IMR-90 (cell line): ENCODE measurements at regions of chr12 and their contacts with region 1.

Region 1: GRCh38 chr12:66717036-66717673 is 38.3 kb upstream of the GRIP1 start:
- DNase-seq: no peak
- ATAC-seq: no peak
- H3K4me3 ChIP-seq: no peak overlapping the region
- H3K27ac ChIP-seq: no peak overlapping the region
- H3K4me1 ChIP-seq: no peaks in the 10 kb centered on the region
- H3K27me3 ChIP-seq: no peaks in the 10 kb centered on the region
- CTCF ChIP-seq: no peak
- POLR2A ChIP-seq: no peak
- RAD21 ChIP-seq: no peak

Region 2: GRCh38 chr12:66269757-66270383 is 447.3 kb before region 1 on chr12:
- CTCF ChIA-PET with region 1: no interaction called
- POLR2A ChIA-PET with region 1: no interaction called
- dilution Hi-C with region 1: no loop called
- in situ Hi-C with region 1: loop called (anchors 10 kb)
- intact Hi-C with region 1: no loop called
- DNase-seq: peak; percentile 62
- ATAC-seq: peak; percentile 92
- H3K4me3 ChIP-seq: no peak overlapping the region
- H3K27ac ChIP-seq: no peak overlapping the region
- H3K4me1 ChIP-seq: no peaks in the 10 kb centered on the region
- H3K27me3 ChIP-seq: peaks cover 15% of the 10 kb centered on the region
- CTCF ChIP-seq: peak; percentile 75
- POLR2A ChIP-seq: no peak
- RAD21 ChIP-seq: peak; percentile 61

Region 3: DNA sequence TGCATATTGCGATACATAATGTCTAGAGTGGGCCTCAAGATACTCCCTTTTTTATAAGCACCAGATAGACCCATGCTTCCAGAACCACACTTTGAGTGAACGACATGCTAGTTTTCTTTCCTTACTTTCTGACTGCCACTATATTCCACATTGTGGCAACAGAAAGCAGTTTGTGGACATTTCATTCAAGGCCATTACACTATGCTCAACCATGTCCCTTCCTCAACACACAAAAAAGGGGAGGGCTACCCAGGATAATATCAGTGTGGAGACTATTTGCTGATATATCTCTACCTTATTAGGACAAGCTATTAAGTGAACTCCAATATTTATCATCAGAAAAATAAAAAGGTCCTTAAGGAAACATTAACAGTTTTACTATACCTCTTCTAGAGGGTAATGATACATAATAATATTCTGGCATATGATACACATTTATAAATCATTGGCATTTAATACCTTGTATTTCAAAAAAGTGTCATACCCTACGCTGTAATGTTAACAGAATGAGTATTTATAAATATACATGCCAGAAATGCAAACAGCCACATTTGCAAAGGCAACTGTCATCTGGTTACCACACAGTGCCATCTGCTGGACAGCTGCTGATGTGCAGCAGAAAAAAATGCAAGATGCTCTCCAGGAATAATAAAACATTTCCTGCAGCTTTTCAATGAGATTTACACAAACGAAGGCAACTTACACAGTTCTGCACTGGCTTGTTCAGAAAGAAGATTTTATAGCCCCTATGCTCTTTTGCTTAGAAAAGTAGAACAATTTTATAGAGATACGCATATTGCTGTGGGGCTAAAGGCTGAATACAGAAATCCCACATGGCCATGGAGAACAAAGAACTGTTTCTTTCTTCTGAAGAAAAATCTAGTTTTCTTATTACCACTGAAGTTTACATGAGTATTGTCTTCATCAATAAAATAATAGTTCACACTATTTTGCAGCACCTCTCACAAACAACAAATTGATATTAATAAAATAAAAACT is 143.9 kb after region 1 on chr12:
- CTCF ChIA-PET with region 1: no interaction called
- POLR2A ChIA-PET with region 1: no interaction called
- dilution Hi-C with region 1: no loop called
- in situ Hi-C with region 1: no loop called
- intact Hi-C with region 1: no loop called
- DNase-seq: peak; percentile 53
- ATAC-seq: peak; percentile 84
- H3K4me3 ChIP-seq: no peak overlapping the region
- H3K27ac ChIP-seq: no peak overlapping the region
- H3K4me1 ChIP-seq: no peaks in the 10 kb centered on the region
- H3K27me3 ChIP-seq: no peaks in the 10 kb centered on the region
- CTCF ChIP-seq: peak; percentile 90
- POLR2A ChIP-seq: no peak
- RAD21 ChIP-seq: peak; percentile 51

Region 4: DNA sequence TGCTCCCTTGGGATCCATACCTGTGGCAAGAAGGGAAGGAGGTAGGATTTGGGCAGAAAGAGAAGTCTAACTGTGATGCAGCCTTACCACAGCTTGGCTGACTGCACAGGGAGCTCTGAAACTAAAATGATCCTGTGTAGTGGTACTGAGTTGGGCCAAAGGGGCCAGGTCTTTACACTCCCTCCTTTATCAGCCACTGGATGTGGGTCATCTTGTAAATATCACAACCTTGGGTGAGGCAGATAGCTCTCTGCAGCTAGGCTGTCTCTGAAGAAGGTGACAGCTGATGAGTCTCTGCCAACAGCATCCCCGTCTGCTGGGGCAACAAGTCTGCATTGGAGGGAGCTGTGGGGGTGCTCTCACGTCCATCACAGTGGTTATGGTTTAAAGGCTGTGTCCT is 456.1 kb after region 1 on chr12:
- CTCF ChIA-PET with region 1: no interaction called
- POLR2A ChIA-PET with region 1: no interaction called
- dilution Hi-C with region 1: no loop called
- in situ Hi-C with region 1: no loop called
- intact Hi-C with region 1: no loop called
- DNase-seq: no peak
- ATAC-seq: no peak
- H3K4me3 ChIP-seq: no peak overlapping the region
- H3K27ac ChIP-seq: no peak overlapping the region
- H3K4me1 ChIP-seq: no peaks in the 10 kb centered on the region
- H3K27me3 ChIP-seq: no peaks in the 10 kb centered on the region
- CTCF ChIP-seq: no peak
- POLR2A ChIP-seq: no peak
- RAD21 ChIP-seq: no peak